MCF 10A (cell line): ENCODE measurements at regions of chr14 and their contacts with region 1.

Region 1: GRCh38 chr14:24425704-24426103 is 3.8 kb downstream of the CBLN3 start:
- DNase-seq: peak; percentile 84
- H3K4me3 Mint-ChIP-seq: no peak overlapping the region
- H3K27ac Mint-ChIP-seq: peak overlapping the region; percentile 80
- H3K4me1 Mint-ChIP-seq: peaks cover 31% of the 10 kb centered on the region
- H3K27me3 Mint-ChIP-seq: no peaks in the 10 kb centered on the region
- CTCF ChIP-seq: no peak

Region 2: GRCh38 chr14:24395609-24396582 is 29.8 kb before region 1 on chr14:
- CTCF ChIA-PET with region 1: interaction called, 22 read pairs
- POLR2A ChIA-PET with region 1: interaction called, 16 read pairs
- intact Hi-C with region 1: no loop called
- DNase-seq: no peak
- H3K4me3 Mint-ChIP-seq: no peak overlapping the region
- H3K27ac Mint-ChIP-seq: peak overlapping the region; percentile 84
- H3K4me1 Mint-ChIP-seq: peaks cover 28% of the 10 kb centered on the region
- H3K27me3 Mint-ChIP-seq: no peaks in the 10 kb centered on the region
- CTCF ChIP-seq: no peak

Region 3: DNA sequence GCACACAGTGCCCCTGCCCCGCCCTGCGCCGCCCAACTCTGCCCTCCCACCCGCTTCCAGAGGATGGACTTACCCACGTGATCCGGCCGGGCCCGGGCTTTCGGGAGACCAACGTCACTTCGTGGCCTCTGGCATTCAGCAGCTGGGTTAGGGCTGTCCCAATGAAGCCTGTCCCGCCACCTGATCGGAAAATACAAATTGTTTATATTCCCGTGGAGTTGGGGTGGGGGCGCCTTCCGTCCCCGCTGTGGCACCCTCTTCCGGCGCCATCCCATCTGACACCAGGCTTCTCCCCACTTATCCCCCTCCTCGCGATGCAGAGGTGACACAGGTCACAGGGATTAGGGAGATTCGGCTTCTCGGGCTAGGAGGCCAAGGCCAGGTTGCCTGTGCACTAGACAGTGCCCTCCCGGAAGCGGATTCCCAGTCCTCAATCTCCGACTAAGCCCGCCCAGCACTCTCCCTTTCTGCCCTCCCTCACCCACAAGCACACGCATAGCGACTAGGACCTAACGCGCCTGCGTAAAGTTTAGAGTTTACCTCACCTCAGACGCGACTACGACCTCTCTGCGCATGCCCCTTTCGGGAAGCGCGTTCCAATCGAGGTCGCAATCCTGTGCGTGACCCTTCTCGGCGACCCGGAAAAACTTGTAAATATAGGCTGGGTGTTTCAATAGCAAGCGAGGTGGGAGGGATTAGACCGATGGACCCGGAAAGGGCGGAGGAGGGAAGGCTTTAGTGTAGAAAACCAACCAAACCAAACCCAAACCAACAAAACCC is 16.8 kb after region 1 on chr14 and contains the start of gene SDR39U1:
- CTCF ChIA-PET with region 1: interaction called, 40 read pairs
- POLR2A ChIA-PET with region 1: interaction called, 47 read pairs
- intact Hi-C with region 1: no loop called
- DNase-seq: peak; percentile 99
- H3K4me3 Mint-ChIP-seq: peak within 1 kb of the TSS; percentile 78
- H3K27ac Mint-ChIP-seq: peak within 1 kb of the TSS; percentile 100
- H3K4me1 Mint-ChIP-seq: peaks cover 8% of the 10 kb centered on the region
- H3K27me3 Mint-ChIP-seq: no peaks in the 10 kb centered on the region
- CTCF ChIP-seq: no peak
- total RNA-seq, gene SDR39U1: 53.2 and 58.7 TPM in 2 replicates